GM10248 (cell line): ENCODE measurements at regions of chr4 and their contacts with region 1.

Region 1: GRCh38 chr4:106245192-106245591 is 70.8 kb downstream of the TBCK start:
- DNase-seq: no peak
- CTCF ChIP-seq: no peak

Region 2: GRCh38 chr4:106197832-106198231 is 47.4 kb before region 1 on chr4:
- CTCF ChIA-PET with region 1: no interaction called
- POLR2A ChIA-PET with region 1: no interaction called
- DNase-seq: no peak
- CTCF ChIP-seq: no peak

Region 3: GRCh38 chr4:106256190-106256589 is 11.0 kb after region 1 on chr4:
- CTCF ChIA-PET with region 1: interaction called, 32 read pairs
- POLR2A ChIA-PET with region 1: no interaction called
- DNase-seq: no peak
- CTCF ChIP-seq: no peak